ENCODE measurements at regions of chr4 and their contacts with region 1.

Region 1: DNA sequence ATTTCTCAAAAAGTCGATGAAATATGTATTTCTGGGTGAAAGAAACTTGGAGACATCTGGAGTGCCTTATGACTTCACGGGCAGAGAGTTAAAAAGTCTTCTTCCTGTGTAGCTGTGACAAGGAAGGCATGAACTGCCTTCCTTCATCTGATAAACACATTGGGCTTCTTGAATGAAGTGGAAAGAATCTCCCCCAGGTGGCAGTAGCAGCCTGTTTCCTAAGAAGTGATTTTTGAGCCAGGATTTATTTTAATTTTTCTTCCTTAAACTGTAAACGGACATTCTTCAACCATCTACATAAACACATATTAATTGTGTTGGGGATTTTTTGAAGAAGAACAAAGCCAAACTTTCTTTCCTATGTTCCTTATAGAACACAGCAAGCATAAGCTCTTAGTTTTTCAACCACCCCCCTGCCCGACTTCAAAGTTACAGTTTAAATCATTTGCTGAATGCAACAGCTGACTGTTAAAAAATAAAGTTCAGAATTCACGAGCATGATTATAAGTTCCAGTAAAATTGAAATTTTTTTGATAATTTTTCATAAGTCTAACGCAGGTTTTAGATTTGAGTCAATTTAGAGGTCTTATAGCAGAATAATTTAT is 980 bp upstream of the GIMD1 start:
- DNase-seq: peak; percentile 31
- H3K4me3 ChIP-seq: no peak overlapping the region
- H3K27me3 ChIP-seq: no peaks in the 10 kb centered on the region
- CTCF ChIP-seq: peak; percentile 73

Region 2: GRCh38 chr4:106266201-106266600 is 103.4 kb before region 1 on chr4:
- CTCF ChIA-PET with region 1: interaction called, 11 read pairs
- POLR2A ChIA-PET with region 1: no interaction called
- DNase-seq: peak; percentile 26
- H3K4me3 ChIP-seq: no peak overlapping the region
- H3K27me3 ChIP-seq: no peaks in the 10 kb centered on the region
- CTCF ChIP-seq: peak; percentile 65

Region 3: GRCh38 chr4:106340774-106341173 is 28.8 kb before region 1 on chr4:
- CTCF ChIA-PET with region 1: no interaction called
- POLR2A ChIA-PET with region 1: no interaction called
- DNase-seq: no peak
- H3K4me3 ChIP-seq: no peak overlapping the region
- H3K27me3 ChIP-seq: no peaks in the 10 kb centered on the region
- CTCF ChIP-seq: no peak

Region 4: DNA sequence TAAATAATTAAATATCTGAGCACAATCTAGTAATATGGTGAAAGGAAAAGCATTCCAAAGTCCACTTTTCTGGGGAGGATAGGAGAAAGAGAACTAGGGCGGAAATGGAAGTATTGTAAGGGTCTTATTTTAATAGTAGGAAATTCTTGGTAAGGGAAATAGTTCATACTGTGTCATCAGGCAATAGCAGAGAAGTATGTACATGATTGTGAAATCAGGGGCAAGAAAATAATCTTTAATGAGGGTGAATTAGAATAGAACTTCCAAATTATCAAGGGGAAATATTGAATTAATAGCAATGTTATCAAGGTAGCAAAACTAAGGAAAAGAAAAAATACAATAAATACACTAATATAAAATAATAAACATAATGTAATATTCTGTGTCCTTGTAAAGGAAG is 15.8 kb before region 1 on chr4:
- CTCF ChIA-PET with region 1: no interaction called
- POLR2A ChIA-PET with region 1: no interaction called
- DNase-seq: no peak
- H3K4me3 ChIP-seq: no peak overlapping the region
- H3K27me3 ChIP-seq: no peaks in the 10 kb centered on the region
- CTCF ChIP-seq: no peak

Region 5: DNA sequence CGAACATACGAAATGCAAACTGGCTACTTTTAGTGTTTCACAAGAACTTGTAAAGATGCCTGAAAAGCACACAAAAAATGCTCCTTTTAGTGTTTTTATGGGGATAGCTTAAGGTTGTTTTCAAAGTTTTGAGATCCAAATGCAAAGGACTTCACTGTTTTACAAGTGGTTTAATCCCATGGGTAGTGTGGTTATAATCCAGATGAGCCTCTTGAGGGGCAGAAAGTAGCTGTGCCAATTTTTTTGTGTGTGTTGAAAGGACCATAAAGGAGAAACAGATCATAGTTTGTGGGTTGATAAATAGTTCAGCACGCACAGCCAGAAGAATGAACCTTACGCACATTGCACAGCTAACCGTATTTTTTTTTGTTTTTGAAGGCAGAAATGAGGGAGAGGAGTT is 125.9 kb after region 1 on chr4:
- CTCF ChIA-PET with region 1: interaction called, 16 read pairs
- POLR2A ChIA-PET with region 1: no interaction called
- DNase-seq: peak; percentile 73
- H3K4me3 ChIP-seq: no peak overlapping the region
- H3K27me3 ChIP-seq: no peaks in the 10 kb centered on the region
- CTCF ChIP-seq: no peak

Region 6: DNA sequence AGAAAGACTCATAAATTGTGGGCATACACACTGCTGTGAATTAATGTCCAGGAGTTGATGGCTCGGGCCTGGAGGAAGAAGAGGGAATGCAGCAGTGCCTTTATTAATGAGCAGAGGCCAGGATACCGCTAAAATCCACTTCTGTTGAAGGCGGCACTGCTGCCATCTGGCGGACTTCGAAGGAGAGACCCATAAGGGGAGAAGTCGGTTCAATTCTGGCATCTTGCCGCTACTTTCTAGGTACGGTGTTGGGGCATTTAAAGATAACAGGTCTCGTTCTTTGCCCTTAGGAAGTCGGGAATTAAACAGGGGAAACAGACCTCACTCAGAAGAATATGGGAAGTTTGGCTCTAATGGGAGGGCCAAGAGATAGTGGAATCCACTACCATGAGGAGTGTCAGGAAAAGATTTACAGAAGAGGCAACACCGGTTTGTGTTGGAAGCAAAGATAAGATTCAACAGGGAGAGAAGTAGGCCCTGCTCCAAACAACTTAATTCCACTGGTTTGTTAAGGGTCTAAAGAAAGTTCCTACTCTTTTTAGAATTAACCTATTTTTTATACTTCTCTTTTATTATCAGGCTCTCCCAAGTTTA is 132.6 kb after region 1 on chr4:
- CTCF ChIA-PET with region 1: interaction called, 17 read pairs
- POLR2A ChIA-PET with region 1: no interaction called
- DNase-seq: no peak
- H3K4me3 ChIP-seq: no peak overlapping the region
- H3K27me3 ChIP-seq: no peaks in the 10 kb centered on the region
- CTCF ChIP-seq: peak; percentile 78

Region 7: DNA sequence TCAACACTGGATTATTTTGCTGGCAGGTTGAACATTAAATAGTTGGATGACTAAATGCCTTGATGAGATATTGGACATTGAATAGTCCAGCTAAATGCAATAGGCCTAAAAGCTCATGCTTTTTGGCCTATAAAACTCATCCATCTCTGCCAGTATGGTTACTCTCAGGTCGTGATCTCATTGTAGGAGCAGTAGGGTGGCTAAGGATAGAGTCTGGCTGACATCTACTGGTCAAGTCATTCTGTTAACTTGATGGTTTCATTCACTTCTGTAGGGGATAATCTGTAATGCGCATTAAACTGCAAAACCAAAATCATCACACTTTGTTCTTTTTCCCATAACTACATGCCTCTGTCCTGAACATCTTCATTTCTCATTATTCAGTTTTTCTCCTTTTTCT is 439.5 kb after region 1 on chr4:
- CTCF ChIA-PET with region 1: interaction called, 18 read pairs
- POLR2A ChIA-PET with region 1: no interaction called
- DNase-seq: no peak
- H3K4me3 ChIP-seq: no peak overlapping the region
- H3K27me3 ChIP-seq: no peaks in the 10 kb centered on the region
- CTCF ChIP-seq: peak; percentile 60